Gastrocnemius medialis (tissue), 4 donors: ENCODE measurements at regions of chr14 and their contacts with region 1.

Region 1: GRCh38 chr14:89493877-89494634 is 77.0 kb upstream of the FOXN3 start:
- DNase-seq: no peak
- ATAC-seq: no peak
- H3K4me3 ChIP-seq: no peak overlapping the region
- H3K27ac ChIP-seq: no peak overlapping the region
- H3K4me1 ChIP-seq: peaks cover 38 to 42% of the 10 kb centered on the region in 2 donors
- H3K27me3 ChIP-seq: no peaks in the 10 kb centered on the region
- CTCF ChIP-seq: no peak
- POLR2A ChIP-seq: no peak

Region 2: GRCh38 chr14:89198544-89199329 is 295.3 kb before region 1 on chr14:
- in situ Hi-C with region 1: no loop called
- intact Hi-C with region 1: no loop called
- DNase-seq: peak in 1 of 2 donors; percentile 37
- ATAC-seq: peak; percentile 61 to 72
- H3K4me3 ChIP-seq: peak overlapping the region; percentile 2 to 35 (median 26)
- H3K27ac ChIP-seq: peak overlapping the region; percentile 62 to 84 (median 69)
- H3K4me1 ChIP-seq: peaks cover 45 to 50% of the 10 kb centered on the region in 2 donors
- H3K27me3 ChIP-seq: no peaks in the 10 kb centered on the region
- CTCF ChIP-seq: no peak
- POLR2A ChIP-seq: peak; percentile 45 to 56

Region 3: DNA sequence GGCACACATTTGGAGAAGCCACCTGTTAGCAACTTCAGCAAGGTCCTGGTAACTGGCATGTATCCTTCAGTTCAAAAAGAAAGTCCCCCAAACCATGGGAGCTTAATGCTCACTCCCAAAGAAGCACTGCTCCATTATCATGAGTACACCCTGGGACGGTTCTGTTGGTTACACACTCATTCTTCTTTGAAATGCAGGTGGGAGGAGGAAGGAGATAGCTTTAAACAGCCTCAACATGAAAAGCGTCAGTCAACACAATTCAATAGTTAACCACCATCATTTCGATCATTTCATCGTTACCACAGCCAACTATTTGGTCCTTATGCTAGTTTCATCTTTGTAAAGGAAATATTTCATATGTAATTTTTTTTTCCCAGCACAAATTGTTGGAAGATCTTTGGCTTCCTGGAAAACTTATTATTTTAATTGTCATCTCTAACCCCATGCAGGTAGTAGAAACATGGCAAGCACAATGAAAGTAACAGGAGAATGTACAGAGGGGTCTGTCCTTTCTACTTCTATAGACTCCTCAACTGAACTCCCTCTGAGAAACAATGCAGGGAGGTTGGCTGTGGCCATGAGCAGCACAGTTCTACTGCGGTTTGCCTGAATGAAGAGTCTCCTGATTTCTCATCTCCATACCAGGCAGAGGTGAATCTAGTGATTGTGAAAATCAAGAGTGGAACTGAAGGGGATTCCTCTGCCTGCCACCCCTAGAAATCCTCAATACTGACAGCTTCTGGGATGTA is 119.4 kb after region 1 on chr14:
- in situ Hi-C with region 1: no loop called
- intact Hi-C with region 1: loop called (anchors 5 kb)
- DNase-seq: no peak
- ATAC-seq: no peak
- H3K4me3 ChIP-seq: no peak overlapping the region
- H3K27ac ChIP-seq: peak overlapping the region; percentile 20 to 65 (median 30)
- H3K4me1 ChIP-seq: peaks cover 44 to 47% of the 10 kb centered on the region in 2 donors
- H3K27me3 ChIP-seq: no peaks in the 10 kb centered on the region
- CTCF ChIP-seq: no peak
- POLR2A ChIP-seq: no peak